GM12878 (cell line): ENCODE measurements at regions of chr4 and their contacts with region 1.

Region 1: GRCh38 chr4:37977471-37978247 is 17.5 kb downstream of the PTTG2 start:
- DNase-seq: peak; percentile 44
- ATAC-seq: peak; percentile 86
- H3K4me3 ChIP-seq: peak overlapping the region; percentile 83
- H3K27ac ChIP-seq: peak overlapping the region; percentile 45
- H3K4me1 ChIP-seq: peaks cover 21% of the 10 kb centered on the region
- H3K27me3 ChIP-seq: no peaks in the 10 kb centered on the region
- CTCF ChIP-seq: peak; percentile 67 to 85 (median 68)
- EP300 ChIP-seq: no peak
- POLR2A ChIP-seq: peak; percentile 62
- RAD21 ChIP-seq: peak; percentile 66

Region 2: DNA sequence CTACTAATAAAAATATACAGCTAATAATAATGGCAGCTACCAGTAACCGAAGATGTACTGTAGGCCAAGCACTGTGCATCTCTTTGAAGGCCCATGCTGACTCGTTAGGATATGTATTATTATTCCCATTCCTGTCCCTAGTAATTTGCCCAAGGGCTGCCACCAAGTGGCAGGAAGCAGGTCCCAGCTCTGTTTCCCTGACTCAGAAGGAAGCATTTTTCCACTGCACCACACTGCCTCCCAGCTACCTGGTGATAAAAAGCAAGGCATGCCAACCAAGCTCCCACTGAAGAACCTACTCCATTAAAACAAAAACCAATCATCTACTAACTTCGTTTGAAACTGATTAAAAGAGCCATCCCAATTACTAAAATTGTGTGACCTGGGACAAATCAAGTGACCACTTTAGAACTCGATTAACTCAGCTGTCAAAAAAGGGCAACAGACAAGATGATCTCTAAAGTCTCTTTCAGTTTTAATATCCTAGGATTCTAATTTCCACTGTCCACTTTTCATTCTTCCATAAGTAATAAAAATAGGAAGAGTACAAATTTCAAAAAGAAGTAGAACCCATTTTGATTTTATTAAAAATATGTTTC is 175.5 kb before region 1 on chr4:
- CTCF ChIA-PET with region 1: interaction called, 69 read pairs
- POLR2A ChIA-PET with region 1: no interaction called
- RAD21 ChIA-PET with region 1: interaction called, 15 read pairs
- SMC1A ChIA-PET with region 1: interaction called, 6 read pairs
- in situ Hi-C with region 1: no loop called
- intact Hi-C with region 1: loop called (anchors 5 kb)
- DNase-seq: no peak
- ATAC-seq: no peak; the same call in 2 of the 3 replicates
- H3K4me3 ChIP-seq: no peak overlapping the region
- H3K27ac ChIP-seq: no peak overlapping the region
- H3K4me1 ChIP-seq: no peaks in the 10 kb centered on the region
- H3K27me3 ChIP-seq: no peaks in the 10 kb centered on the region; a peak in 1 of 4 replicates
- CTCF ChIP-seq: peak; percentile 12 to 41 (median 24); a peak in 4 of 6 replicates
- EP300 ChIP-seq: no peak
- POLR2A ChIP-seq: no peak
- RAD21 ChIP-seq: peak; percentile 44

Region 3: DNA sequence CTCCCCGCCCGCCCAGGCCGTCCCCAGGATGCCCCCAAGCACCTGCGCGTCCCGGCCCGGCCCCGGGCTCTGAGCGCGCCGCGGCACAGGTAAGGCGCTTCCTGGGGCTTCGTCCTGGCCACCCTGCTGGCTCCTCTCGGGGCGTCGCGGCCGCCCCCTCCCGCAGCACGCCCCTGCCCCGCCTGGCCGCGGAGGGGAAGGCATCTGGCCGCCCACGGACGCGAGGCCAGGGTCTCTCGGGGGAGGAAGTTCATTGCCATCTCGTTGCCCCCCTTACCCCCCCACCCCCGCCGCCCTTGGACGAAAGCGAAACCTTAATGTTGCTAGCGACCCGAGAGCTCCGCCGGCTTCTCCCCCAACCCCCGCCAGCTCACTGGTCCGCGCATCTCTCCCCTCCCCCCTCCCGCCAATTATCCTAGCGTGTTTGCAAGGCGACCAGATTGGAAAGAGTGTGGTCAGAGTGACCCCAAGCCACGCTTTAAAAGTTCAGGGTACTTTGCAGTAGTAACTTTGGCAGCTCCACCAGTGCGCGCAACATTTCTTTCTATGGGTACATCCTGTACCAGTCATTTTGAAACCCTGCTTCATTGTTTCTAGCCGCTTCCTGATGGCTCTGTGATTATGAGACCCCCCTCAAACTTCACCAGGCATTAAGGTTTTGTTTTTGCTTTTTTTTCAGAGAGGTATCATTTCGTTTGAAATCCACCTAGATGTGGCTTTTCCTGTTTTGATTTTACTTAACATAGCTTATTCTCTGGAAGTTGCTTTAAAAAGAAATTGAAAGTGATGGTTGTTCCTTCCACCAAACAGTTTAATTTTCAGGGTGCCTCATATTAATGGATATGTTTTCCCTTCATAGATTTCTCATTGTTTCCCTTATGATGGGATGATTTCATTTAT is 86.1 kb before region 1 on chr4:
- CTCF ChIA-PET with region 1: interaction called, 11 read pairs
- POLR2A ChIA-PET with region 1: no interaction called
- RAD21 ChIA-PET with region 1: interaction called, 29 read pairs
- SMC1A ChIA-PET with region 1: interaction called, 11 read pairs
- in situ Hi-C with region 1: no loop called
- intact Hi-C with region 1: loop called (anchors 1 kb)
- DNase-seq: peak; percentile 79
- ATAC-seq: peak; percentile 69
- H3K4me3 ChIP-seq: peak overlapping the region; percentile 59
- H3K27ac ChIP-seq: peak overlapping the region; percentile 70
- H3K4me1 ChIP-seq: peaks cover 18% of the 10 kb centered on the region
- H3K27me3 ChIP-seq: no peaks in the 10 kb centered on the region
- CTCF ChIP-seq: peak in 1 of 3 experiments; percentile 15; a peak in 1 of 6 replicates
- EP300 ChIP-seq: peak in 1 of 2 experiments; percentile 70; a peak in 1 of 4 replicates
- POLR2A ChIP-seq: peak; percentile 72
- RAD21 ChIP-seq: no peak

Region 4: DNA sequence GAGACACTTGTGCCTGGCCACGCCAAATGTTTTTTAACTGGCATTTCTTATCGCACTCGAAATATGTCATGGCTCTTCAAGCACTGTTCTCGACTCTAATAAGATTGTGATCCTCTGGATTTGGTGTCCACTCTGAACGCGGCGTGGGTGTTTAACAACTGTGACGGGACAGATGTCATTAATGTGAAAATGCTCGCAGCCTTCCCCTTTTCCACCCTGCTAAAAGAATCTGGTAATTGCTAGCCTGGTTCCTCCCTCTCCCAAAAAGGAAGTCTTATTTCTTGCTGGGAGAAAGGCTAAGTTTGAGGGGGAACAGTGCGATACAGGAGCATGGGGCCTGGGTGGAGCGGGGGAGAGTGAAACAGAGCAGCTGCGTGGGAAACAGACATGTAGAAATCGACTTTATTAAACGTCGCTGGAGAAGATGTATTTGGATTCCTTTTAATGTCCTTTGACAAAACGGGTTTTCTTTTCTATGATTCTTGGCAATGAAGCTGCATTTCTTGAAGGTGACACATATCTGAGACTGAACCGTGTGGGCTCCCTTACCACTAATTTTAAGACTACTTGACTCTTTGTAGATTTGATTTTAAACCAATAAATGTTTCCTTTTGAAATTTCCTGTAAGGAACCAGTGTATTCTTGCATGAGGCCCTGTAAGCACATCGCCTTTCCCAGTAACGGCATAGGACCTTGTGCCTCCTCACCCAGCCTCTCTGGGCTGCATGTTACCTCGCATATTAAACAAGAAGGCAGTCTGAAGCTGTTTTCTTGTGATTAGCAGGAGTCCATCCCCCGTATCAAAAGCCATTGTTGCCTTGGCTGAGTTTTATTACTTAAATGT is 68.9 kb before region 1 on chr4:
- CTCF ChIA-PET with region 1: no interaction called
- POLR2A ChIA-PET with region 1: no interaction called
- RAD21 ChIA-PET with region 1: no interaction called
- SMC1A ChIA-PET with region 1: no interaction called
- in situ Hi-C with region 1: no loop called
- intact Hi-C with region 1: no loop called
- DNase-seq: no peak
- ATAC-seq: no peak
- H3K4me3 ChIP-seq: no peak overlapping the region
- H3K27ac ChIP-seq: no peak overlapping the region
- H3K4me1 ChIP-seq: no peaks in the 10 kb centered on the region
- H3K27me3 ChIP-seq: no peaks in the 10 kb centered on the region
- CTCF ChIP-seq: no peak
- EP300 ChIP-seq: no peak
- POLR2A ChIP-seq: no peak
- RAD21 ChIP-seq: no peak

Region 5: DNA sequence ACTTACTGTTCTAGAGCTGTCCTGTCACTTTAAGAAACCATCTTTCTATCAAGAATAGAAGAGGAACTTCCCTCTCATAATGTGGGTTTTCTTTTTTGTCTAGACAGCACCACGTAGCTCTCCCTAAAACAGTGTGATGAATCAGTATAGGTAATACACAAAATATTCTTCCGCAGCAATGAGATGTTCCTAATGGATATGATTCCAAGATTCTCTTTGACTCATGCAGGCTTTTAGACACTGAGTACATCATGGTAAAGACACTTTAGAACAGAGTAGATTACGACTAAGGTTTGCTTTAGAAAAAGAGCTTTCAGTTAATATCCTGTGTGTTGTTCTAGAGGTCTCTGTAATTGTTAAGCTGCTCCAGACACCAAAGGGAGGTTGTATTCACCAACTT is 52.4 kb after region 1 on chr4:
- CTCF ChIA-PET with region 1: interaction called, 16 read pairs
- POLR2A ChIA-PET with region 1: interaction called, 3 read pairs
- RAD21 ChIA-PET with region 1: interaction called, 4 read pairs
- SMC1A ChIA-PET with region 1: interaction called, 10 read pairs
- in situ Hi-C with region 1: no loop called
- intact Hi-C with region 1: no loop called
- DNase-seq: no peak
- ATAC-seq: no peak
- H3K4me3 ChIP-seq: no peak overlapping the region
- H3K27ac ChIP-seq: no peak overlapping the region
- H3K4me1 ChIP-seq: no peaks in the 10 kb centered on the region
- H3K27me3 ChIP-seq: no peaks in the 10 kb centered on the region
- CTCF ChIP-seq: no peak
- EP300 ChIP-seq: no peak
- POLR2A ChIP-seq: no peak
- RAD21 ChIP-seq: no peak